ENCODE measurements at regions of chr21 and their contacts with region 1.

Region 1: DNA sequence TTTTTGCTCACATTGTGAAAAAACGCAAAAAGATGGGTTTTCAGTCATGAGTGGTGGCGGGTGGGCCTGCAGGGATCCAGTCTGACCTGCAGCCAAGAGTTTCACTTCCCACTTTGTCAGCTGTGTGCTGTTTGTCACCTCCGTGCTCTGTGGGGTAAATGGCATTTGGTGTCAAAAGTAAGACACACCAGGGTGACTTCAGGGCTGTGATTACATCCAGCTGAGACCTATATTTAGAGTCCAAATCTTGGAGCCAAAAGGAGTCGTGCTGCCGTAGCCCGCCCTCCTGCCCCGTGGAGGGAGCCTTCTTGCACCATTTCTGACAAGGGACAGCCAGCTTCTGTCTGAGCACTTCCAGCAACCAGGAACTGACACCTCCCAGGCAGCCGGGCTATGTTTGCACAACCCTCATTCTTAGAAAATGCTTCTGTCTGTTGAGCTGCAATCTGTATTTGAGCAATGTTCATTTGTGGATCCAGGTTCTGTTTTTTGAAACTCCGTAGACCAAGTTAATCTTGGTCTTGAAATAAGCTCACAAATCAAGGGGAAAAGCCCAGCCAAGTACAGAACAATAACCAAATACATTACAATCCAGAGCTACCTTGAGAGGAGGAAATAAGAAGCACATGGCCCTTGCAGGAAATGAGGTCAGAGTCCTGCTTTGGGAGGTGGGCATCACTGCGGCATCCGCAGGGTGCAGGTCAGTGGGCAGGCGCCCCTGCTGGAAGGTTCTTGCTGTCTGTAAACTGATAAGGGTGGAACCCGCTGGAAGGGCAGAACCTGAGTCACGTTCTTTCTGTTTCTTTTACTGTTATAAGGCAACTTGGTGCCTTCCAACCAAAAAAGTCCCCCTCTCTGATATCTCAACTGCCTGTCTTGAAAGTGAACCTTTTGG is 14.4 kb downstream of the ABCG1 start:
- DNase-seq: peak; percentile 91
- ATAC-seq: peak; percentile 56
- H3K4me3 ChIP-seq: peak overlapping the region; percentile 5 to 62 (median 16)
- H3K4me3 Mint-ChIP-seq: peak overlapping the region; percentile 82
- H3K27ac ChIP-seq: peak overlapping the region; percentile 93 to 98
- H3K27ac Mint-ChIP-seq: peak overlapping the region; percentile 93
- H3K4me1 ChIP-seq: peaks cover 78 to 92% of the 10 kb centered on the region in 2 donors
- H3K4me1 Mint-ChIP-seq: peaks cover 95% of the 10 kb centered on the region
- H3K27me3 ChIP-seq: no peaks in the 10 kb centered on the region
- H3K27me3 Mint-ChIP-seq: no peaks in the 10 kb centered on the region
- CTCF ChIP-seq: peak; percentile 69

Region 2: GRCh38 chr21:41361786-41362604 is 871.3 kb before region 1 on chr21 and contains the start of gene MX2:
- CTCF ChIA-PET with region 1: no interaction called
- POLR2A ChIA-PET with region 1: no interaction called
- intact Hi-C with region 1: loop called (anchors 10 kb)
- DNase-seq: peak; percentile 90
- ATAC-seq: peak; percentile 81
- H3K4me3 ChIP-seq: peak within 1 kb of the TSS; percentile 60 to 79 (median 69)
- H3K4me3 Mint-ChIP-seq: peak within 1 kb of the TSS; percentile 83
- H3K27ac ChIP-seq: peak within 1 kb of the TSS; percentile 94 to 98
- H3K27ac Mint-ChIP-seq: peak within 1 kb of the TSS; percentile 99
- H3K4me1 ChIP-seq: peaks cover 42 to 59% of the 10 kb centered on the region in 2 donors
- H3K4me1 Mint-ChIP-seq: peaks cover 57% of the 10 kb centered on the region
- H3K27me3 ChIP-seq: no peaks in the 10 kb centered on the region
- H3K27me3 Mint-ChIP-seq: no peaks in the 10 kb centered on the region
- CTCF ChIP-seq: no peak
- total RNA-seq, gene MX2: 64.3 and 72.8 TPM in 2 replicates

Region 3: GRCh38 chr21:42009831-42010523 is 223.3 kb before region 1 on chr21 and contains the start of gene ZBTB21:
- CTCF ChIA-PET with region 1: no interaction called
- POLR2A ChIA-PET with region 1: interaction called, 5 read pairs
- intact Hi-C with region 1: loop called (anchors 5 kb)
- DNase-seq: peak; percentile 99
- ATAC-seq: peak; percentile 78
- H3K4me3 ChIP-seq: peak within 1 kb of the TSS; percentile 48 to 90 (median 74)
- H3K4me3 Mint-ChIP-seq: peak within 1 kb of the TSS; percentile 98
- H3K27ac ChIP-seq: peak within 1 kb of the TSS; percentile 99
- H3K27ac Mint-ChIP-seq: peak within 1 kb of the TSS; percentile 100
- H3K4me1 ChIP-seq: peaks cover 3 to 6% of the 10 kb centered on the region in 2 donors
- H3K4me1 Mint-ChIP-seq: peaks cover 31% of the 10 kb centered on the region
- H3K27me3 ChIP-seq: no peaks in the 10 kb centered on the region
- H3K27me3 Mint-ChIP-seq: no peaks in the 10 kb centered on the region
- CTCF ChIP-seq: no peak
- total RNA-seq, gene ZBTB21: 39.0 and 40.1 TPM in 2 replicates

Region 4: DNA sequence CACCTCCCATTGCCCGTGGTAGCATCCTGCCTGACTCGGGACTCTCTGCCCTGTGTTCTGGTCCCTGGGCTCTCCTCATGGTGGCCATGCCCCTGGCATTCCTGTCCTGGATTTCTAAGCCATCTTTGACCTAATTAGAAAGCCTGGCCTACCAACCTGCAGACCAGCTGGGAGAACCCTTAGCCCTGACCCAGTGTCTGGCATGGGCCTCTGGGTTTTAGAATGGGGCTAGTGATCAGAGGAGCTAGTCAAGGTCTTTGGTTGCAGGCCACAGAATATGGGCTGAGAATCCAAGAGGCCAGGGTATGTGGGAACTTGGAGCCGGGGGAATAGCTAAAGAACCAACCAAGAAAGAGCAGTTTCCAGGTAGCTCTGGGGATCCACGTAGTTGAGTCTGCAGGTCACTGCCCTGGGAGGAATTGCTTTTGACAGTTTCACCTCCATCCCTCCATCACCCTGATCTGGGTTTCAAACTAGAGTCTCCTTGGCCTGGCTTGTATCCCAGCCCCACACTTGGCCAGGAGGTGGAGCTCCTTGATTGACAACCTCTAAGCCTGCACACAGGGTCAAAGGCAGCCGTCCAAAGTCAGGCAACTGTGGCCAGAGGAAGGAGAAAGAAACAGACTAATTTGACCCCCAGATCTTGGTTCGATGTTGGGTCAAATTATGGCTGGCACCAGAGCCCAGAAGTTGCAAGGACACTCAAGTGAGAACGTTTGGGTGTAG is 69.1 kb before region 1 on chr21:
- CTCF ChIA-PET with region 1: interaction called, 19 read pairs
- POLR2A ChIA-PET with region 1: no interaction called
- intact Hi-C with region 1: no loop called
- DNase-seq: peak; percentile 73
- ATAC-seq: peak; percentile 82
- H3K4me3 ChIP-seq: no peak overlapping the region
- H3K4me3 Mint-ChIP-seq: no peak overlapping the region
- H3K27ac ChIP-seq: no peak overlapping the region
- H3K27ac Mint-ChIP-seq: peak overlapping the region; percentile 43
- H3K4me1 ChIP-seq: peaks cover 8 to 15% of the 10 kb centered on the region in 2 donors
- H3K4me1 Mint-ChIP-seq: peaks cover 14% of the 10 kb centered on the region
- H3K27me3 ChIP-seq: peaks cover 0 to 5% (median 2%) of the 10 kb centered on the region in 4 experiments
- H3K27me3 Mint-ChIP-seq: peaks cover 3% of the 10 kb centered on the region
- CTCF ChIP-seq: peak; percentile 73

Region 5: GRCh38 chr21:42199488-42200458 is 33.5 kb before region 1 on chr21:
- CTCF ChIA-PET with region 1: no interaction called
- POLR2A ChIA-PET with region 1: no interaction called
- intact Hi-C with region 1: loop called (anchors 2 kb)
- DNase-seq: peak; percentile 66
- ATAC-seq: peak; percentile 91
- H3K4me3 ChIP-seq: no peak overlapping the region
- H3K4me3 Mint-ChIP-seq: peak overlapping the region; percentile 61
- H3K27ac ChIP-seq: no peak overlapping the region
- H3K27ac Mint-ChIP-seq: no peak overlapping the region
- H3K4me1 ChIP-seq: peaks cover 18 to 27% of the 10 kb centered on the region in 2 donors
- H3K4me1 Mint-ChIP-seq: peaks cover 27% of the 10 kb centered on the region
- H3K27me3 ChIP-seq: no peaks in the 10 kb centered on the region
- H3K27me3 Mint-ChIP-seq: no peaks in the 10 kb centered on the region
- CTCF ChIP-seq: no peak

Region 6: DNA sequence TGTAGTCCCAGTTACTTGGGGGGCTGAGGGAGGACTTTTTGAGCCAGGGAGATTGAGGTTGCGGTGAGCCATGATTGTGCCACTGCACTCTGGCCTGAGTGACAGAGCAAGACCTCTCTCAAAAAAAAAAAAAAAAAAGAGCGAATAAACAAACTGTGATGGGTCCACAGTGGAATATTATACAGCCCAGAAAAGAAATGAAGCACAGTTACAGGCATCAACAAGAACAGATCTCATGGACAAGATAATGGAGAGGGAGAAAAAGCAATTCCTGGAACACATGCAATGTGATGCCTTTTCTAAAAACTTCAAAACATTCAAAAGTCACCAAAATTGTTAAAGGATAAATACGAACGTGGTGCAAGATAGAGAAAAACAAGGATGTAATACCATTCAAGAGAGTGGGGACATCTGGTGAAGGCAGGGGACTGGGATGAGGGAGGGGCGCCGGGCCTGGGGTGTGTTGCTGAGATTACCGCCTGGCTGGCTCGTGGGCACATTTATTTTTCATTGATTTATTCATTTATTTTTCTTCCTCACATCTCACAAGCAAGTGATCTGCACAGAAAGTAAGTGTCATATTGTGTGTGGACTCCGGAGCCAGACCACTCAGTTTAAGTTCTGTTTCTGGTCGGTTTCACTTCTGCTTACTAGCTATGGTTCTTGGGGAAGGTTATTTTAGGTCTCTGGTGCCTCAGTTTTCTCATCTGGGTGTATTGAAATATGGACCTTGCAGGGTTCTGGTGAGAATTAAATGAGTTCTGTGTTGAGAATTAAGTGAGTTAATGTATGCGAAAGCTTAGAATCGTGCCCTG is 15.7 kb after region 1 on chr21:
- CTCF ChIA-PET with region 1: interaction called, 14 read pairs
- POLR2A ChIA-PET with region 1: interaction called, 5 read pairs
- intact Hi-C with region 1: loop called (anchors 1 kb)
- DNase-seq: peak; percentile 81
- ATAC-seq: peak; percentile 96
- H3K4me3 ChIP-seq: no peak overlapping the region
- H3K4me3 Mint-ChIP-seq: peak overlapping the region; percentile 24
- H3K27ac ChIP-seq: peak overlapping the region in 1 of 2 donors; percentile 19
- H3K27ac Mint-ChIP-seq: peak overlapping the region; percentile 50
- H3K4me1 ChIP-seq: peaks cover 22 to 51% of the 10 kb centered on the region in 2 donors
- H3K4me1 Mint-ChIP-seq: peaks cover 67% of the 10 kb centered on the region
- H3K27me3 ChIP-seq: no peaks in the 10 kb centered on the region
- H3K27me3 Mint-ChIP-seq: no peaks in the 10 kb centered on the region
- CTCF ChIP-seq: no peak

Region 7: DNA sequence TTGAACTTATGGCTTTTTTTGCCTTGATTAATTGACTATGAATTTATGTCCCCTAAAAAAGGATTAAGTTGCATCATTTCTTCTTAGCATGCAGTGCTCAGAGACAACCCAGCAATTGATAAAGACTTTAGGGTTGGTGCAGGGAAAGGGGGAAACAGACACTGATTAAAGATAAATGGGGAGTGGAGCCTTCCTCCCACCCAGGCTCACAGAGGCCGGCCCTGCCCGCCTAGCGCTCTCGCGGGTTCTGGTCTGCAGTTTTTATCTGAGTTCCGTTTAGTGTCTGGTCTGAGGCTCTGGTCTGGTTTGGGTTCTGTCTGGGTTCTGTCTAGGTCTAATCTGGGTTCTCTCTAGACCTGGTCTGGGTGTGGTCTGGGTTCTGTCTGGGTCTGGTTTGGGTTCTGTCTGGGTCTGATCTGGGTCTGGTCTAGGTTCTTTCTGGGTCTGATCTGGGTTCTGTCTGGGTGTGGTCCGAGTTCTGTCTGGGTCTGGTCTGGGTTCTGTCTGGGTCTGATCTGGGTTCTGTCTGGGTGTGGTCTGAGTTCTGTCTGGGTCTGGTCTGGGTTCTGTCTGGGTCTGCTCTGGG is 33.8 kb after region 1 on chr21:
- CTCF ChIA-PET with region 1: no interaction called
- POLR2A ChIA-PET with region 1: no interaction called
- intact Hi-C with region 1: no loop called
- DNase-seq: no peak
- ATAC-seq: no peak
- H3K4me3 ChIP-seq: no peak overlapping the region
- H3K4me3 Mint-ChIP-seq: no peak overlapping the region
- H3K27ac ChIP-seq: no peak overlapping the region
- H3K27ac Mint-ChIP-seq: no peak overlapping the region
- H3K4me1 ChIP-seq: peaks cover 27 to 33% of the 10 kb centered on the region in 2 donors
- H3K4me1 Mint-ChIP-seq: peaks cover 37% of the 10 kb centered on the region
- H3K27me3 ChIP-seq: peaks cover 0 to 3% (median 0%) of the 10 kb centered on the region in 4 experiments
- H3K27me3 Mint-ChIP-seq: no peaks in the 10 kb centered on the region
- CTCF ChIP-seq: no peak

Region 8: GRCh38 chr21:42424914-42425541 is 191.7 kb after region 1 on chr21:
- CTCF ChIA-PET with region 1: no interaction called
- POLR2A ChIA-PET with region 1: no interaction called
- intact Hi-C with region 1: no loop called
- DNase-seq: peak; percentile 56
- ATAC-seq: peak; percentile 69
- H3K4me3 ChIP-seq: no peak overlapping the region
- H3K4me3 Mint-ChIP-seq: peak overlapping the region; percentile 27
- H3K27ac ChIP-seq: no peak overlapping the region
- H3K27ac Mint-ChIP-seq: no peak overlapping the region
- H3K4me1 ChIP-seq: peaks cover 18 to 28% of the 10 kb centered on the region in 2 donors
- H3K4me1 Mint-ChIP-seq: peaks cover 25% of the 10 kb centered on the region
- H3K27me3 ChIP-seq: peaks cover 0 to 29% (median 9%) of the 10 kb centered on the region in 4 experiments
- H3K27me3 Mint-ChIP-seq: peaks cover 39% of the 10 kb centered on the region
- CTCF ChIP-seq: no peak

Region 9: GRCh38 chr21:42460391-42461204 is 227.3 kb after region 1 on chr21:
- CTCF ChIA-PET with region 1: no interaction called
- POLR2A ChIA-PET with region 1: no interaction called
- intact Hi-C with region 1: loop called (anchors 2 kb)
- DNase-seq: peak; percentile 94
- ATAC-seq: peak; percentile 69
- H3K4me3 ChIP-seq: peak overlapping the region in 4 of 5 experiments; percentile 20 to 67 (median 40)
- H3K4me3 Mint-ChIP-seq: peak overlapping the region; percentile 88
- H3K27ac ChIP-seq: peak overlapping the region; percentile 83 to 93
- H3K27ac Mint-ChIP-seq: peak overlapping the region; percentile 99
- H3K4me1 ChIP-seq: peaks cover 60% of the 10 kb centered on the region in 2 donors
- H3K4me1 Mint-ChIP-seq: peaks cover 59% of the 10 kb centered on the region
- H3K27me3 ChIP-seq: no peaks in the 10 kb centered on the region
- H3K27me3 Mint-ChIP-seq: no peaks in the 10 kb centered on the region
- CTCF ChIP-seq: no peak